Natural killer cell (primary cell): ENCODE measurements at regions of chr1 and their contacts with region 1.

Region 1: GRCh38 chr1:113978863-113979702 is at the start of gene OLFML3:
- DNase-seq: peak; percentile 49 to 70
- ATAC-seq: peak; percentile 27 to 42 (median 37)
- H3K4me3 ChIP-seq: no peak within 1 kb of the TSS
- H3K4me3 Mint-ChIP-seq: peak within 1 kb of the TSS; percentile 42
- H3K27ac ChIP-seq: no peak within 1 kb of the TSS
- H3K27ac Mint-ChIP-seq: peak within 1 kb of the TSS; percentile 49 to 83
- H3K4me1 ChIP-seq: peaks cover 35% of the 10 kb centered on the region
- H3K4me1 Mint-ChIP-seq: peaks cover 54 to 65% of the 10 kb centered on the region in 2 donors
- H3K27me3 ChIP-seq: no peaks in the 10 kb centered on the region
- H3K27me3 Mint-ChIP-seq: no peaks in the 10 kb centered on the region
- CTCF ChIP-seq: peak; percentile 76
- total RNA-seq, gene OLFML3: 0.16 TPM in 1 of 3 donors, not detected in the others

Region 2: GRCh38 chr1:114282751-114283403 is 303.8 kb after region 1 on chr1:
- intact Hi-C with region 1: loop called (anchors 1 kb)
- DNase-seq: peak; percentile 82 to 93
- ATAC-seq: peak; percentile 94 to 100 (median 100)
- H3K4me3 ChIP-seq: no peak overlapping the region
- H3K4me3 Mint-ChIP-seq: no peak overlapping the region
- H3K27ac ChIP-seq: no peak overlapping the region
- H3K27ac Mint-ChIP-seq: no peak overlapping the region
- H3K4me1 ChIP-seq: peaks cover 8% of the 10 kb centered on the region
- H3K4me1 Mint-ChIP-seq: peaks cover 41 to 42% of the 10 kb centered on the region in 2 donors
- H3K27me3 ChIP-seq: no peaks in the 10 kb centered on the region
- H3K27me3 Mint-ChIP-seq: no peaks in the 10 kb centered on the region
- CTCF ChIP-seq: peak; percentile 81

Region 3: GRCh38 chr1:114428083-114428749 is 449.1 kb after region 1 on chr1:
- intact Hi-C with region 1: loop called (anchors 1 kb)
- DNase-seq: peak in 1 of 2 donors; percentile 58
- ATAC-seq: peak in 1 of 3 donors; percentile 39
- H3K4me3 ChIP-seq: no peak overlapping the region
- H3K4me3 Mint-ChIP-seq: no peak overlapping the region
- H3K27ac ChIP-seq: no peak overlapping the region
- H3K27ac Mint-ChIP-seq: no peak overlapping the region
- H3K4me1 ChIP-seq: no peaks in the 10 kb centered on the region
- H3K4me1 Mint-ChIP-seq: no peaks in the 10 kb centered on the region
- H3K27me3 ChIP-seq: no peaks in the 10 kb centered on the region
- H3K27me3 Mint-ChIP-seq: no peaks in the 10 kb centered on the region
- CTCF ChIP-seq: peak; percentile 70

Region 4: DNA sequence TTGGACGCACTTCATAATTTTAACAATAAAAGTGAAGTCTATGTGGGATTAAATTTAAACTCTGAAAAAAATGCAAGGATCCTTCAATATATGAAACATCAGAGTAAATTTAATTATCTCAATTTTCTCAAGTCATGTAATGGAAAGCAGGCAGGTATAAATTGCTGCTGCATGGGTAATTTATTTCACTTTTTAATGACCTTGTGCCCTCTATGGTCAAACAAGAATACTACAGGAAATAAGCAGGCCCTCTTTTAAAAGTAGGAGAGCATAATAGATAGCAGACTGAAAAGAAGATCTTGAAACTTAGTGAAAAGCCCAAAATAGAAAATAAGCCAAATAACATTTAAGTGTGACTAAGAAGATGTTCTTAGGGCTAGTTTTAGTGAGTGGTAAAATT is 579.5 kb after region 1 on chr1:
- intact Hi-C with region 1: loop called (anchors 5 kb)
- DNase-seq: peak in 1 of 2 donors; percentile 46
- ATAC-seq: peak in 2 of 3 donors; percentile 58 to 73
- H3K4me3 ChIP-seq: no peak overlapping the region
- H3K4me3 Mint-ChIP-seq: no peak overlapping the region
- H3K27ac ChIP-seq: no peak overlapping the region
- H3K27ac Mint-ChIP-seq: no peak overlapping the region
- H3K4me1 ChIP-seq: peaks cover 2% of the 10 kb centered on the region
- H3K4me1 Mint-ChIP-seq: no peaks in the 10 kb centered on the region
- H3K27me3 ChIP-seq: no peaks in the 10 kb centered on the region
- H3K27me3 Mint-ChIP-seq: no peaks in the 10 kb centered on the region
- CTCF ChIP-seq: peak; percentile 59